Activated naive CD8-positive, alpha-beta T cell treated with anti-CD3 and anti-CD28 coated beads, Interleukin-2, amount 10 ng/mL, durations not matched to agents 7 days and 5 days (primary cell): ENCODE measurements at regions of chr6 and their contacts with region 1.

Region 1: DNA sequence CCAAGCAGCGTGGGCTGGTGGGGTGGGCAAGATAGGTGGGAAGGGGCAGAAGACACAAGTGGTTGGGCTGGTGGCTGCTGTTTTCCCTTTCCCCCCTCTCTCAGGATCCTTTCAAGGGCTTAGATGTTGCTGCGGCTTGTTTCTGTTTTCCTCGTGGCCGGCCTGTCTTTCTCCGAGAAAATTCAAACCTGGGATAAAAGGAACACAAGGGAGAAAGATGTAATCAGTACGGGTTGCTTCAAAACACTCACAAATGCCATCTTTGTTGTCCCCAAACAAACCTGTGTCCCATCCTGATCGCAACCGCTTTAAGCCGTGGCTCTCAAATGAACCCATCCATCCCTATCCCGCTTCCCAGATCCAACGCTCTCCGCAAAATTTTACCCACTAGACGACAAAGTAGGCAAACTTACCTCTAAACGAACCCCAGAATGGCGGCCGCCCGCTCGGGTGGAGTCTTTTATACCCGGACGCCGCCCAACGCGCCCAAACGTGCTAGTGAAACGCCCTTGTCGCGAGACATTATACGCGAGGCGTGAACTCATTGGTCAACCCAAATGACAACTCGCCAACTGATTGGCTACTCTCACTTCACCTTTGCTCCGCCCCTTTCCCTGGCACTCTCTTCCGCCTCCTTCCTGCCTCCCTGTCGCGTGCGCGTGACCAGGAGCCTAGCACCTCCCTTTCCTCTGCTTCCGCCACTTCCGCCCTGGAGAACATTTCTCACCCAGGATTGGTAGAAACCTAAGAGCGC is at the start of gene PPP1R10:
- DNase-seq: peak; percentile 97
- ATAC-seq: peak; percentile 73
- H3K4me3 Mint-ChIP-seq: peak within 1 kb of the TSS; percentile 95
- H3K27ac Mint-ChIP-seq: peak within 1 kb of the TSS; percentile 98
- H3K4me1 Mint-ChIP-seq: peaks cover 32% of the 10 kb centered on the region
- H3K27me3 Mint-ChIP-seq: no peaks in the 10 kb centered on the region
- total RNA-seq, gene PPP1R10: 140 to 151 TPM

Region 2: DNA sequence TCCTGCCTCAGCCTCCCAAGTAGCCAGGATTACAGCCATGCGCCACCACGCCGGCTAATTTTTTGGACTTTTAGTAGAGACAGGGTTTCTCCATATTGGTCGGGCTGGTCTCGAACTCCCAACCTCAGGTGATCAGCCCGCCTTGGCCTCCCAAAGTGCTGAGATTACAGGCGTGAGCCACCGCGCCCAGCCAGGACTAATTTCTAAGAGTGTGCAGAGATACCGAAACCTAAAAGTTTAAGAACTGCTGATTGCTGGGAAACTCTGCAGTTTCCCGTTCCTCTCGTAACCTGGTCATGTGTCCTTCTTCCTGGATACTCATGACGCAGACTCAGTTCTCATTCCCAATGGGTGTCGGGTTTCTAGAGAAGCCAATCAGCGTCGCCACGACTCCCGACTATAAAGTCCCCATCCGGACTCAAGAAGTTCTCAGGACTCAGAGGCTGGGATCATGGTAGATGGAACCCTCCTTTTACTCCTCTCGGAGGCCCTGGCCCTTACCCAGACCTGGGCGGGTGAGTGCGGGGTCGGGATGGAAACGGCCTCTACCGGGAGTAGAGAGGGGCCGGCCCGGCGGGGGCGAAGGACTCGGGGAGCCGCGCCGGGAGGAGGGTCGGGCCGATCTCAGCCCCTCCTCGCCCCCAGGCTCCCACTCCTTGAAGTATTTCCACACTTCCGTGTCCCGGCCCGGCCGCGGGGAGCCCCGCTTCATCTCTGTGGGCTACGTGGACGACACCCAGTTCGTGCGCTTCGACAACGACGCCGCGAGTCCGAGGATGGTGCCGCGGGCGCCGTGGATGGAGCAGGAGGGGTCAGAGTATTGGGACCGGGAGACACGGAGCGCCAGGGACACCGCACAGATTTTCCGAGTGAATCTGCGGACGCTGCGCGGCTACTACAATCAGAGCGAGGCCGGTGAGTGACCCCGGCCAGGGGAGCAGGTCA is 127.6 kb before region 1 on chr6 and contains the start of gene HLA-E:
- POLR2A ChIA-PET with region 1: interaction called, 12 read pairs
- DNase-seq: peak; percentile 81
- ATAC-seq: peak; percentile 80
- H3K4me3 Mint-ChIP-seq: peak within 1 kb of the TSS; percentile 99
- H3K27ac Mint-ChIP-seq: peak within 1 kb of the TSS; percentile 99
- H3K4me1 Mint-ChIP-seq: peaks cover 41% of the 10 kb centered on the region
- H3K27me3 Mint-ChIP-seq: no peaks in the 10 kb centered on the region
- total RNA-seq, gene HLA-E: 957 to 962 TPM

Region 3: DNA sequence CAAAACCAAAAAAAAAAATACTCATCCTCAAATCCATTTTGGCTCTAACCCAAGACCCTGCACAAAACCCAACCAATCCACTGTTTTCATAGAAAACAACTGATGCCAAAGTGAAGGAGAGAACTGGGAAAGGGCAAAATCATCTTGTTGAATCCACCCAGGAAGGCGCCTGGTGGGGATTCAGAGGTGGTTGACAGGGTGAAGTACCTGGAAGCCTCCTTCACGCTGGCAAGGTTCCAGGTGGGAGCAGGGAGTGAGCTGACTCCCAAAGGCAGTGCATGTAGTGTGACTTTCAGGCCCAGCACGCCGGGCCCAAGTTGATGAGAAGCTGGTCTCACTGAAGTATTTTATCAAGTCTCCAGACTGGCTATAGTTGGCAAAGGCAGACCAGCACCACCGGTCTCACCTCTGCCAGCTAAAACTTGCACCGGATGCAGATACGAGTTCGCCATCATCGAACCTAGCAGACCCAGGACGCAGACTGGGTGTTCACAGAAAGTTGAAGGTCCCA is 16.5 kb before region 1 on chr6:
- POLR2A ChIA-PET with region 1: interaction called, 69 read pairs
- DNase-seq: no peak
- ATAC-seq: no peak
- H3K4me3 Mint-ChIP-seq: no peak overlapping the region
- H3K27ac Mint-ChIP-seq: no peak overlapping the region
- H3K4me1 Mint-ChIP-seq: peaks cover 18% of the 10 kb centered on the region
- H3K27me3 Mint-ChIP-seq: no peaks in the 10 kb centered on the region

Region 4: GRCh38 chr6:30678964-30679726 is 62.2 kb after region 1 on chr6:
- POLR2A ChIA-PET with region 1: interaction called, 75 read pairs
- DNase-seq: peak; percentile 98
- ATAC-seq: peak; percentile 42
- H3K4me3 Mint-ChIP-seq: peak overlapping the region; percentile 91
- H3K27ac Mint-ChIP-seq: peak overlapping the region; percentile 99
- H3K4me1 Mint-ChIP-seq: peaks cover 24% of the 10 kb centered on the region
- H3K27me3 Mint-ChIP-seq: no peaks in the 10 kb centered on the region

Region 5: DNA sequence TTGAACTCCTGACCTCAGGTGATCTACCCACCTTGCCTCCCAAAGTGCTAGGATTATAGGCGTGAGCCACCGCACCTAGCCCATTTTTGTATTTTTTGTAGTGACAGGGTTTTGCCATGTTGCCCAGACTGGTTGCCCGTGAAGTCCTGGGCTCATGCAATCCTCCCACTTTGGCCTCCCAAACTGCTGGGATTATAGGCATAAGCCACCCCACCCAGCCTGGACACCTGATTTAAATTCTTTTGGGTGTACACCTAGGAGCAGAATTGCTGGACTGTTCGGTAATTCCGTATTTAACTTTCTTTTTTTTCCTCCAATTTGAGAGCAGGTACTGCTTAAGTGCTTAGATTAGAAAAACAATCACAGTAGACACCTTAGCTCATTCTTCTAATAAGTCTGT is 79.4 kb after region 1 on chr6:
- POLR2A ChIA-PET with region 1: no interaction called
- DNase-seq: no peak
- ATAC-seq: no peak
- H3K4me3 Mint-ChIP-seq: no peak overlapping the region
- H3K27ac Mint-ChIP-seq: no peak overlapping the region
- H3K4me1 Mint-ChIP-seq: no peaks in the 10 kb centered on the region
- H3K27me3 Mint-ChIP-seq: no peaks in the 10 kb centered on the region

Region 6: GRCh38 chr6:30717042-30717844 is 100.3 kb after region 1 on chr6 and contains the start of gene MDC1:
- POLR2A ChIA-PET with region 1: interaction called, 45 read pairs
- DNase-seq: peak; percentile 97
- ATAC-seq: peak; percentile 77
- H3K4me3 Mint-ChIP-seq: peak within 1 kb of the TSS; percentile 91
- H3K27ac Mint-ChIP-seq: peak within 1 kb of the TSS; percentile 100
- H3K4me1 Mint-ChIP-seq: peaks cover 41% of the 10 kb centered on the region
- H3K27me3 Mint-ChIP-seq: no peaks in the 10 kb centered on the region
- total RNA-seq, gene MDC1: 50.2 to 52.2 TPM